Ascending aorta (tissue), 2 donors: ENCODE measurements at regions of chr5 and their contacts with region 1.

Region 1: DNA sequence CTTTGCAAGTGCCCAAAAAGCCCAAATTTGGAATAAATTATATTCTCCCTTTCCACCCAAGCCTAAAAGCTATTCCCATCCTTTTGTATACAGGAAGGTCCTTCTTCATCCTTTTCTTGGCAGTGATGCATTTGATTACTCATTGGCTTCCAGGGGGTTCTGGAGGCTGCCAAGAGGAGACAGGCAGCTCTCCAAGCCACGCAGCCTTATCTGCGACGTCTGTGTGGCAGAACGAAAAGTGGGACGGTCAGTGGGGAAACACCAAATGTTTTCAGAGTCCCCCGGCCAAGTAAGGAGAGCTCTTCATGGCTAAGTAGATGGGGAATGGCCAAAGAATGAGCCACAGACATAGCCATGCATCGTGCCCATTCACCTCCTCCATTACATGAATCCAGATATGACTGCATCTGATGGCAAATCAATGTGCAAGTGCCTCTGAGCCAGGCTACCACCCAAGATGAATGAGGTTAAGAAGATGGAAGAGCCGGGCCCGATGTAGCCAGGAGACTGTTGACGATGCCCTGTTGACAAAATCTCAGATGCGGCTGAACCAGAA is 12.1 kb downstream of the ADAM19 start:
- DNase-seq: peak in 1 of 2 donors; percentile 84
- H3K4me3 ChIP-seq: peak overlapping the region in 1 of 2 donors; percentile 23
- H3K27ac ChIP-seq: peak overlapping the region; percentile 81 to 83
- H3K4me1 ChIP-seq: peaks cover 6 to 39% of the 10 kb centered on the region in 2 donors
- H3K27me3 ChIP-seq: no peaks in the 10 kb centered on the region
- CTCF ChIP-seq: no peak

Region 2: GRCh38 chr5:157575381-157576020 is 12.1 kb after region 1 on chr5 and contains the start of gene ADAM19:
- intact Hi-C with region 1: loop called (anchors 1 kb)
- DNase-seq: peak in 1 of 2 donors; percentile 79
- H3K4me3 ChIP-seq: peak within 1 kb of the TSS; percentile 72 to 86
- H3K27ac ChIP-seq: peak within 1 kb of the TSS; percentile 71 to 82
- H3K4me1 ChIP-seq: peaks cover 10 to 22% of the 10 kb centered on the region in 2 donors
- H3K27me3 ChIP-seq: no peaks in the 10 kb centered on the region
- CTCF ChIP-seq: peak in 1 of 3 experiments; percentile 12
- total RNA-seq, gene ADAM19: 11.7 TPM

Region 3: DNA sequence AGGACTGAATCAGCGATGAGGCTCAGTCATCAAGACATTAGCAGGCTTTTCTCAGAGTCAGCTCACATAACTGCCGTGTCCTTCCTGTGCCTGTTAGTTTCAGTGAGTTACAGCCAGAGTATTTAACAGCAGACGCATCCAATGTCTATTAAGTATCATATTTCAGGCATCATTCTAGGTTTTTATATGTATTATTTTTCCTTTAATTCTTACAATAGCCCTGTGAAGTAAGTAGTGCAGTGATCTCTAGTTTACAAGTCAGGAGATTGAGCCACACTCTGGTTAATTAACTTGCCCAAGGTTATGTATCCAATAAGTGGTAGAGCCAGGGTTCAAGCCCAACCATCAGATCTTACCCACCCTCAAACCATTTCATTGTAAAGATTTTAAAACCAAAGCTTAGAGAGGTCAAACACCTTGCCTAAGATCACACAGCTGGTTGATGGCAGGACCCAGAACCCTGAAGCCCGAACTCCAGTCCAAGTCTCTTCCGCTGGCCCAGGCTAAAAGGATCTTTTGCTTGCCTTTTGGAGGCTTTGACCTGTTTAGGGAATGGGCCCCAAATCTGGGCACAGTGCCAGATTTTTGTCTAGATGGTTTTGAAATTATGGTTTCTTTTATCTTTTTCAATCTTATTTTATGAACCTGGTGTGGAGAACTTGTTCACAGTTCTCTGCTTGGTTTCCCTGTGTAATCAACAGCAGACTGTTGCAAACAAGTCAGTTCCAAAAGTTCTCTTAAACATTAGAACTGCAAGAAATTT is 556.7 kb after region 1 on chr5:
- intact Hi-C with region 1: no loop called
- DNase-seq: no peak
- H3K4me3 ChIP-seq: no peak overlapping the region
- H3K27ac ChIP-seq: no peak overlapping the region
- H3K4me1 ChIP-seq: no peaks in the 10 kb centered on the region
- H3K27me3 ChIP-seq: no peaks in the 10 kb centered on the region
- CTCF ChIP-seq: no peak